PC-3 (cell line): ENCODE measurements at regions of chr9 and their contacts with region 1.

Region 1: GRCh38 chr9:13279284-13280141 is at the start of gene MPDZ:
- DNase-seq: peak; percentile 48
- ATAC-seq: peak; percentile 83
- H3K4me3 ChIP-seq: peak within 1 kb of the TSS; percentile 89
- H3K27ac ChIP-seq: no peak within 1 kb of the TSS
- H3K4me1 ChIP-seq: peaks cover 9% of the 10 kb centered on the region
- H3K27me3 ChIP-seq: no peaks in the 10 kb centered on the region
- CTCF ChIP-seq: no peak
- total RNA-seq, gene MPDZ: 6.1 and 7.3 TPM in 2 replicates

Region 2: DNA sequence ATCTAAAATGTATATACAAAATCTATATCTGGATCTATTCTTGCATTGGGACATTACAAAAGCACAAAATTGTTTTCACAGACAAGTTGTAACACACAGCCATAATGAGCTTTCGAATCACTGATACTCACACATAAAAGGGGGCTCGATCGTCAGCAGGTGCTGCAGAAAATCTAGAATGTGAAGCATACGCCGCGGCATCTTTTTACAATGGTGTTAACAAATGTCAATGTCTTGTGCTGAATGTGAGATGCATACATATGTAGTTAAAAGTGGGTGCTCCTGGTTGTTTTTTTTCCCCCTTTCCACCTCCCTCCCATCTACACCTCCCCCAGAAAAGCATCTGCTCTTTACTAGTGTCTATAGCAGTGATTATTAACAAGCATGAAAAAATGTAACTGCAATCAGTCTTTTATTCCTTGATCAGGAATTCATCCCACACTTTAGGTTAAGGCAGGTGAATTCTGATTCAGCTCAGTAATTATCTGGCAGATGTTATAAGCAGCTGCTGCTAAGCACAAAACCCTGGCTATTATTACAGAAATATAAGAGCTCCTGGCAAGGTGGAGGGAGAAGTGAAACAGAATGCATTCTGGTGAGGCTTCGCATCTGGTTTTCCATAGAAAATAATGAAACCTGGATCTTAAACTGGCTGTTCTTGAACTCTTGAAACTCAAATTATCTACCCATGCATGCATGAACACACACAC is 114.1 kb before region 1 on chr9:
- CTCF ChIA-PET with region 1: no interaction called
- POLR2A ChIA-PET with region 1: interaction called, 10 read pairs
- intact Hi-C with region 1: no loop called
- DNase-seq: no peak
- ATAC-seq: no peak
- H3K4me3 ChIP-seq: no peak overlapping the region
- H3K27ac ChIP-seq: no peak overlapping the region
- H3K4me1 ChIP-seq: peaks cover 10% of the 10 kb centered on the region
- H3K27me3 ChIP-seq: no peaks in the 10 kb centered on the region
- CTCF ChIP-seq: no peak